ENCODE measurements at regions of chrX and their contacts with region 1.

Region 1: GRCh38 chrX:19739683-19740082 is 147.7 kb downstream of the SH3KBP1 start:
- DNase-seq: peak; percentile 64
- H3K4me3 ChIP-seq: no peak overlapping the region
- H3K27ac ChIP-seq: no peak overlapping the region
- H3K4me1 ChIP-seq: peaks cover 9% of the 10 kb centered on the region
- H3K27me3 ChIP-seq: no peaks in the 10 kb centered on the region
- CTCF ChIP-seq: peak; percentile 57 to 64
- POLR2A ChIP-seq: no peak

Region 2: GRCh38 chrX:19593690-19594089 is 146.0 kb before region 1 on chrX:
- CTCF ChIA-PET with region 1: interaction called, 7 read pairs
- POLR2A ChIA-PET with region 1: no interaction called
- dilution Hi-C with region 1: no loop called
- intact Hi-C with region 1: loop called (anchors 1 kb)
- DNase-seq: peak; percentile 52
- H3K4me3 ChIP-seq: no peak overlapping the region
- H3K27ac ChIP-seq: no peak overlapping the region
- H3K4me1 ChIP-seq: no peaks in the 10 kb centered on the region
- H3K27me3 ChIP-seq: no peaks in the 10 kb centered on the region
- CTCF ChIP-seq: peak; percentile 22 to 27
- POLR2A ChIP-seq: no peak

Region 3: DNA sequence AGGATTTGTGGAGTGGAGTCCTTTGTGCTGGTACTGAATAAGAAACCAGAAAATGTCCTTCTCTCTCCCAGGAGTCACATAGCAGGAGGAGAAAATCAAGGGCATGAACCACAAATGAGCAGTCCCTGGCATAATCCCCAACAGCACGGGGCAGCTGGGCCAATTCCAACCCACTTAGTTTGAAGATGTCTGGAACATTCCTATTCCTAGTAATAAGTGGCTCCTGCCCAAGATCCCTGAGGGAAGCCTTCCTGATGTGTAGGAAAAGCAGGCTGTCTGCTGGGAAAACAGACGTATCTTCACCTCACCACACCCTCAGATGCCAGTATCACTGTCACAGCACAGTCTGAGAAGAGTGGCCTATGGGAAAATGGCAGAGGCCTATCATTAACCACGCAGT is 41.6 kb before region 1 on chrX:
- CTCF ChIA-PET with region 1: no interaction called
- POLR2A ChIA-PET with region 1: no interaction called
- dilution Hi-C with region 1: no loop called
- intact Hi-C with region 1: no loop called
- DNase-seq: no peak
- H3K4me3 ChIP-seq: no peak overlapping the region
- H3K27ac ChIP-seq: no peak overlapping the region
- H3K4me1 ChIP-seq: no peaks in the 10 kb centered on the region
- H3K27me3 ChIP-seq: no peaks in the 10 kb centered on the region
- CTCF ChIP-seq: no peak
- POLR2A ChIP-seq: no peak

Region 4: GRCh38 chrX:19785647-19786046 is 46.0 kb after region 1 on chrX:
- CTCF ChIA-PET with region 1: no interaction called
- POLR2A ChIA-PET with region 1: no interaction called
- dilution Hi-C with region 1: no loop called
- intact Hi-C with region 1: no loop called
- DNase-seq: no peak
- H3K4me3 ChIP-seq: no peak overlapping the region
- H3K27ac ChIP-seq: no peak overlapping the region
- H3K4me1 ChIP-seq: no peaks in the 10 kb centered on the region
- H3K27me3 ChIP-seq: no peaks in the 10 kb centered on the region
- CTCF ChIP-seq: no peak
- POLR2A ChIP-seq: no peak

Region 5: GRCh38 chrX:19824603-19825002 is 84.9 kb after region 1 on chrX:
- CTCF ChIA-PET with region 1: no interaction called
- POLR2A ChIA-PET with region 1: no interaction called
- dilution Hi-C with region 1: no loop called
- intact Hi-C with region 1: no loop called
- DNase-seq: no peak
- H3K4me3 ChIP-seq: no peak overlapping the region
- H3K27ac ChIP-seq: no peak overlapping the region
- H3K4me1 ChIP-seq: no peaks in the 10 kb centered on the region
- H3K27me3 ChIP-seq: no peaks in the 10 kb centered on the region
- CTCF ChIP-seq: no peak
- POLR2A ChIP-seq: no peak